ACHN (cell line): ENCODE measurements at regions of chr21 and their contacts with region 1.

Region 1: GRCh38 chr21:39715804-39716397 is 29.1 kb upstream of the IGSF5 start:
- DNase-seq: peak; percentile 46

Region 2: GRCh38 chr21:39518138-39518846 is 197.6 kb before region 1 on chr21:
- in situ Hi-C with region 1: loop called (anchors 10 kb)
- DNase-seq: peak; percentile 64